ENCODE measurements at regions of chr9 and their contacts with region 1.

Region 1: GRCh38 chr9:129131300-129132145 is 20.3 kb downstream of the PTPA start:
- DNase-seq: peak; percentile 91
- ATAC-seq: peak; percentile 82
- H3K4me3 Mint-ChIP-seq: no peak overlapping the region
- H3K27ac Mint-ChIP-seq: no peak overlapping the region
- H3K4me1 Mint-ChIP-seq: peaks cover 21% of the 10 kb centered on the region
- H3K27me3 Mint-ChIP-seq: no peaks in the 10 kb centered on the region
- CTCF ChIP-seq: peak; percentile 98

Region 2: DNA sequence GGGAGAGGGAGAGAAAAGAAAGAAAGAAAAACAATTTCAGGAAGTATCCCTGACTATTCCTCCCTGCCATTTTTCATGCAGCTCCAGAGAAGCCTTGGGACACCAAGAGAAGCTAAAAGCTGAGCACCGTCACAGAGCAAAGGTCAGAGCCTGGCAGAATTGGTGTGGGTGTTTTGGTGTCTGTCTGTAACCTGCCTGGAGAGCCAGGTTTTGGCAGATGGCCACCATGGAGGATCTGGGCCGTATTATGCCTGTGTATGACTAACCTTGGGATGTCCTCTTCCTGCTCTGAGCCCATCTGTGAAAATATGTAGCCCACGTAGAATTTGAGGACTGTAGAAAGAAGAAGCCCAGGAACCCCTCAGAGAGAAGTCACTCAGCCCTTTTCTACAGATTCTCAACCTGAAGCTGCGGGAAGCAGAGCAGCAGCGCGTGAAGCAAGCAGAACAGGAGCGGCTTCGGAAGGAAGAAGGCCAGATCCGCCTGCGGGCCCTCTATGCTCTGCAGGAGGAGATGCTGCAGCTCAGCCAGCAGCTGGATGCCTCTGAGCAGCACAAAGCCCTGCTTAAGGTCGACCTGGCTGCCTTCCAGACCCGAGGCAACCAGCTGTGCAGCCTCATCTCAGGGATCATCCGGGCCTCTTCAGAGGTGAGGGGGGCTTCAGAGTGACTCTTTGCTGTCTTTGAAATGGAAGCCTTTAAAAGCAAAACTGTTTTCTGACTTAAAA is 608.2 kb before region 1 on chr9:
- CTCF ChIA-PET with region 1: no interaction called
- POLR2A ChIA-PET with region 1: no interaction called
- DNase-seq: peak; percentile 22
- ATAC-seq: peak; percentile 77
- H3K4me3 Mint-ChIP-seq: no peak overlapping the region
- H3K27ac Mint-ChIP-seq: no peak overlapping the region
- H3K4me1 Mint-ChIP-seq: no peaks in the 10 kb centered on the region
- H3K27me3 Mint-ChIP-seq: no peaks in the 10 kb centered on the region
- CTCF ChIP-seq: no peak

Region 3: DNA sequence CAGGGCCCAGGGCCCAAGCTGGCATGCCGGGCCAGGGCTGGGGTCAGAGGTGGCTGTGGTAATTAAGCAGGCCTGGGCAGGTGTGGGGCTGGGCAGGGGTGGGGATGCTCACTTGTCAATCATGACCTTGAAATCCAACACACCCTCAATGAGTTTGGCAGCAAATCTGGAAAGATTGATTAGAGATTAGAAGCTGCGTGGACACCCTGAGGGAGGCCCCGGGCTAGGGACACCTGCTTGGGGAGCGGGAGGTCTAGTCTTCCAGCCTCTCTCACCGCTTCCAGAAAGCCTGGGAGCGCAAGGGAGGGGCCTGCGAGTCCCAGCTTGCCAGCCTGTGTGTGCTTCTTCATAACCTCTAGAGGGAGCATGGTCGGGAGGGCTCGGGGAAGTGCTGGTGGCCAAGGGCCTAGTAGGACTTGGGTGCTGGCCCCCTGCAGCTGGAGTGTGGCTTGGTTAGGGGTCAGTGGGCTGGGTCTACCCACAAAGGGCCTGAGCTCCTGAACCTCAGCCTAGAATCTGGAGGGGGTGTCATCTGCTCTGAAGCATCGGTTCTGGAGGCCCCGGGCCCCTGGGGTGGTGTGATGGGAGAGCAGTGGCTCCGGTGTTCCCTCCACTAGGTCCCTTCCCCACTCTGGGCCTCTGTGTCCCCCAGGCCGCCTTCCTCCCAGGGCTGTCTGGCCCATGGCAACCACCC is 28.5 kb before region 1 on chr9:
- CTCF ChIA-PET with region 1: interaction called, 18 read pairs
- POLR2A ChIA-PET with region 1: no interaction called
- DNase-seq: peak; percentile 77
- ATAC-seq: peak; percentile 89
- H3K4me3 Mint-ChIP-seq: no peak overlapping the region
- H3K27ac Mint-ChIP-seq: no peak overlapping the region
- H3K4me1 Mint-ChIP-seq: peaks cover 6% of the 10 kb centered on the region
- H3K27me3 Mint-ChIP-seq: peaks cover 15% of the 10 kb centered on the region
- CTCF ChIP-seq: peak; percentile 67

Region 4: DNA sequence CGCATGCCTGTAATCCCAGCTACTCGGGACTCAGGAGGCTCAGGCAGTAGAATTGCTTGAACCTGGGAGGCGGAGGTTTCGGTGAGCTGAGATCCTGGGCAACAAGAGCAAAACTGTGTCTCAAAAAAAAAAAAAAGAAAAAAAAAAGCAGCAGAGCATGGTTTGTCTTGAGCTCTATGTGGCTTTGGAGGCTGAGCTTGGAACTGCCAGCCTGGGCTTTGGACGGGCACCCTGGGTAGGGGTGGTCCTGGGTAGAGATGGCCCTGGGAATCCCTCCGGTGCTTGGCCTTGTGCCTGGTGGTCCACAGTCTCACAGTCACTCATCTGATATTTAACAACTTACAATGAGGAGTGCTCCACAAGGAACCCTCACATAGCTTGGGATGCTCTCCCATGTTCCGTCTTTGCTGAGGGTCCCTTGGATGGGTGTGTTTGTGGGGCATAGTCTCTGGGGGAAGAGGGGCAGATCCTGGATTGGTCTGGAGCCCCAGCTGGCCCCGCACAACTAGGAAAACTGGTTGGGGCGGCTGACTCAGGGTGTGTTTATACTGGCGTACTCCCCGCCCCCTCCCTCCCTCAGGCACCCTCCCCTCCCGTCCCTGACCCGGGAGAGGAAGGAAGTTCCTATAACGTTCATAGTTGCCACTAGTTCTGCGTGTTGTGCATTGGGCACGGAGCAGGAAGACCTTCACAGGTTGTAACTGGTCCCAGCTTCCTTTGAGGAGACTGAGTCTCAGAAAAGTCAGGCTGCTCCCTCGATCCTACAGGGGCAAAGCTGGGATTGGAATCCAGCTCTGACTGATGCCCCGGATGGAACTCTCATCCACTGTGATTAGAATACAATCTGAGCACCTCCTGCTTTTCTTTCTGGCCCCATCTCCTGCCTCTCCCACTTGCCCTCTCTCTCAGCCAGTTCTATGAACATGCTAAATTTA is 35.4 kb after region 1 on chr9:
- CTCF ChIA-PET with region 1: interaction called, 345 read pairs
- POLR2A ChIA-PET with region 1: interaction called, 7 read pairs
- DNase-seq: peak; percentile 67
- ATAC-seq: peak; percentile 77
- H3K4me3 Mint-ChIP-seq: peak overlapping the region; percentile 60
- H3K27ac Mint-ChIP-seq: peak overlapping the region; percentile 78
- H3K4me1 Mint-ChIP-seq: peaks cover 36% of the 10 kb centered on the region
- H3K27me3 Mint-ChIP-seq: peaks cover 12% of the 10 kb centered on the region
- CTCF ChIP-seq: no peak

Region 5: GRCh38 chr9:129276461-129276860 is 144.9 kb after region 1 on chr9:
- CTCF ChIA-PET with region 1: interaction called, 10 read pairs
- POLR2A ChIA-PET with region 1: no interaction called
- DNase-seq: no peak
- ATAC-seq: no peak
- H3K4me3 Mint-ChIP-seq: no peak overlapping the region
- H3K27ac Mint-ChIP-seq: no peak overlapping the region
- H3K4me1 Mint-ChIP-seq: peaks cover 42% of the 10 kb centered on the region
- H3K27me3 Mint-ChIP-seq: peaks cover 3% of the 10 kb centered on the region; the same call in 1 of the 2 replicates
- CTCF ChIP-seq: no peak

Region 6: DNA sequence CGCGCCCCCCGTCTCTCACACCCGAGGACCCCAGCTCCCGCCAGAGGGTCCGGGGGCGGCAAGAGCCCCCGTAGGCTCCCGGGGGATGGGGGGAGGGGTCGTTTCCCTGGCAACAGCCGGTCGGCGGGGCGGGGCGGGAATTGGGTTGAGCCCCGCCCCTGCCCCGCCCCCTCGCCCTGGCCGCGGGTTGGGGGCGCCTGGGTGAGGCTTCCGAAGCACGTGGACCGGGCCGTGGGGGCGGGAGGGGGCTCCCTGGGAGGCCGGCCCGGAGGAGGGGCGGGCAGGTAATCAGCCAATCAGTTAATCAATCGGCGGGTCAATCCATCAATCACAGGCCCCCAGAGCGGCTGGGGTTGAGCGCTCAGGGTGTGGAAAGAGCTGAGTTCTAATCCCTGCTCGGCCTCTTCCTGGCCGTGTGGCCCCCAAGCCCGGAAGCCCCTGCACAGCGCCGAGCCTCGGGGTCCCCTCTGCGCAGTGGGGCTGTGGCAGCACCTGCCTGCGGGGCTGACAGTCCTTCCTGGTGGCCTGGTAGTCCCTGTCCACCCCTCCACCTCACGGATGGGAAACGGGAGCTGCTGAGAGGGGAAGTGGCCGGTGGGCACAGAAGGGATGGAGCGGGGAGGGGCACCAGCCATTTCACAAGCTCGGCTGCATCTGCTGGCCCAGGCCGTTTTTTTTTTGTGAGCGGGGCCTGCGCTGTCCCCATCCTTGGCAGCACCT is 220.8 kb after region 1 on chr9:
- CTCF ChIA-PET with region 1: interaction called, 12 read pairs
- POLR2A ChIA-PET with region 1: no interaction called
- DNase-seq: peak; percentile 89
- ATAC-seq: peak; percentile 56
- H3K4me3 Mint-ChIP-seq: peak overlapping the region; percentile 81
- H3K27ac Mint-ChIP-seq: no peak overlapping the region
- H3K4me1 Mint-ChIP-seq: peaks cover 27% of the 10 kb centered on the region
- H3K27me3 Mint-ChIP-seq: peaks cover 12% of the 10 kb centered on the region
- CTCF ChIP-seq: no peak

Region 7: DNA sequence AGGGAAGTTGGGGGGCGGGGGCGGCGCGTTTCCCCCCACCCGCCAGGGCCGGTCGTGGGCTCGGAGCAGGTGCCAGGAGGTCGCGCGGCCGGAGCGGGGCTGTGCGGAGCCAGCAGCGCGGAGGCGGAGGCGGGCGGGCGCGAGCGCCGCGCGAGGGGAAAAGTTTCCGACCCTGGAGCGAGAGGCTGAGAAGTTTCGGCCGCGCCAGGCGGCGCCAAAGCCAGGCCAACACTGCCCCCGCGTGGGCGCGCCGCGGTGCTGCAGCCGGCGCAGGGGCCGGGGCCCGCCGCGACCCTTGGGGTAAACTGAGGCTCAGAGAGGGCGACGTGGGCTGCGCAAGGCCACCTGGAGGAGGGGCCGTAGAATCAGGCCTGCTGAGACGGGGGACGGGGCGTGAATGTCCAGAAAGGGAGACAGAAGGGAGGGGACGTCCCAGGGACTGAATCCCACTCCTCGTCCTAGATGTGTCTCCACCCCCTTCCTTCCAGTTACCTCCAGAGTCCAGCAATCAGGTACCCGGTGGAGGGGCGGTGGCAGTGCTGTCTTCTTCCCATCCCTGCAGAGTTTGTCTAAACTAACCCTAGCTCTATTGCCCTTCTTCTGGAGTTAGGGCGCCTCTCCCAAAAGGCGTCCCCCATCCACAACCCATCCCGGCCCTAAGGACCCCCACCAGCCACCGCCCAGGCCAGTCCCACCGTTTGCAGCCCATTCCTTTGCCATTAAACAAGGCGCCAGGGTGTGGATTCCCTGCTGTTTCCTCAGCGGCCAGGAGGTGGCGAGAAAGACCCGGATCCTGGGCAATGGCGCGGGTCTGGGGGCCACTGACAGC is 479.2 kb after region 1 on chr9:
- CTCF ChIA-PET with region 1: interaction called, 18 read pairs
- POLR2A ChIA-PET with region 1: no interaction called
- DNase-seq: peak; percentile 94
- ATAC-seq: peak; percentile 61
- H3K4me3 Mint-ChIP-seq: peak overlapping the region; percentile 72
- H3K27ac Mint-ChIP-seq: peak overlapping the region; percentile 74; the same call in 1 of the 2 replicates
- H3K4me1 Mint-ChIP-seq: peaks cover 24% of the 10 kb centered on the region
- H3K27me3 Mint-ChIP-seq: peaks cover 11% of the 10 kb centered on the region
- CTCF ChIP-seq: peak; percentile 92

Measured in WTC11 (cell line).